MCF 10A (cell line): ENCODE measurements at regions of chr3 and their contacts with region 1.

Region 1: DNA sequence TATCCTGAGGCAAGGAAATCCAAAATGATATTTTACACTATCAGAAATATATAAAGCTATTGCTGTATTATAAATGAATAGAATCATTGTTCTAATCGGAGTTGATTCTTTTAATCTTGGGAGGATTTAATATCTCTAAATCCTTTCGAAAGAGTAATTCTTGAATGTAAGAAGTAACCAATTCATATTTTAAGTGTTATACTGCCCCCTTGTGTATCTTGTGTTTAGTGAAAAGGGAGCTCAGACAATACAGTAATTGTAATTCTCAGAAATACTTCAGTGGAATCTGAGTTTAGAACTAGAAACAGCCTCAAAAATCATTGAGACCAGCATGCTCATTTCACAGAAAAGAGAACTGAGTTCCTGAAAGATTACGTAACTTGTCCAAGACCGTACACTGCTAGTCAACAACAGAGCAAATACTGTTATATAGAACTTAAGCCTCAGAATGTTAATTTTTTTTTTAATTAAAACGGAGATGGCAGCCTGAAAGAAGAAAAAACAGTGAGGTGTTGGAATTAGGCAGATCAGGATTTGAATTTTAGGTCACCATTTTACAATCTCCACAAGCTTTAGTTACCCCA is 42.9 kb downstream of the PLCH1 start:
- DNase-seq: peak; percentile 60
- H3K4me3 Mint-ChIP-seq: no peak overlapping the region
- H3K27ac Mint-ChIP-seq: no peak overlapping the region
- H3K4me1 Mint-ChIP-seq: no peaks in the 10 kb centered on the region
- H3K27me3 Mint-ChIP-seq: no peaks in the 10 kb centered on the region
- CTCF ChIP-seq: peak; percentile 55

Region 2: GRCh38 chr3:155352900-155353490 is 349.0 kb before region 1 on chr3:
- CTCF ChIA-PET with region 1: interaction called, 139 read pairs
- POLR2A ChIA-PET with region 1: interaction called, 11 read pairs
- intact Hi-C with region 1: loop called (anchors 1 kb)
- DNase-seq: peak; percentile 50
- H3K4me3 Mint-ChIP-seq: no peak overlapping the region
- H3K27ac Mint-ChIP-seq: no peak overlapping the region
- H3K4me1 Mint-ChIP-seq: peaks cover 4% of the 10 kb centered on the region
- H3K27me3 Mint-ChIP-seq: no peaks in the 10 kb centered on the region
- CTCF ChIP-seq: peak; percentile 51

Region 3: DNA sequence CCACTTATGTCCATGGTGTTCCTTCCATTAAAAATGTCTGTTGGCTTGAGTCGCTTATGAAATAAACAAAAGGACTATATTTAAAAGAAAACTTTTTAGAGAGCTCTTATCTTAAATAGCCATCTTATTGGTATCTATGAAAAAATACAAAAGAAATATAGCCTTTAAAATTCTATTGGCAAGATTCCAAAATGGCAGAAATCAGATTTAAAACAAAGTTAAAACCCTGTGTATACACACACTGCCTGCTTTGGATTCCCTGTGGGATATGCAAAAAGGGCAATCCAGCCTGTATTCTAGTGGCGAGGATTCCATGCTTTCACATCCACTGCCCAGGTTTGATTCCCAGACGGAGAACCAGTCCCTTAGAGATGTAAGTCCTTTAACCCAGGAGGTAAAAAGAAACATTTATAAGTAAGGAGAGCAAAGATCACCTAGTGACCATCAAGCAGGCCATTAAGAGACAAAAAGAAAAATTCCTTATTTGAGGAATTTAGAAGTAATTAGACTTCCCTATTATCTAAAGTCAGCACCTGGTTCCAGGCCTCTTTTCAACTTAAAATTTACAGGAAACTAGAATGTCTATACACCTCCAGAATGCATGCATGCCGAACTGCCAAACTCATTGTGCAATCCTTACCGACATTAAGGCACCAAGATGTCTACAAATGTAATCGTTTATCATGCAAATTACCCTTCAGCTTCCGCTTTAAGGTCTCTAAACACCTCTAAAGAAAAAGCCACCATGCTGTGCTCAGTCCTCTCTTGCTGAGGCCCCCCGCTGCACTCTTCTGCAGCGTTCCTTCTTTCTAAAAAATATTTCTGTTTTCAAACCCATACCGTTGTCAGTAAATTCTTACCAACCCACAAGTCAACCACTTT is 338.9 kb before region 1 on chr3:
- CTCF ChIA-PET with region 1: interaction called, 13 read pairs
- POLR2A ChIA-PET with region 1: no interaction called
- intact Hi-C with region 1: no loop called
- DNase-seq: no peak
- H3K4me3 Mint-ChIP-seq: no peak overlapping the region
- H3K27ac Mint-ChIP-seq: no peak overlapping the region
- H3K4me1 Mint-ChIP-seq: no peaks in the 10 kb centered on the region
- H3K27me3 Mint-ChIP-seq: no peaks in the 10 kb centered on the region
- CTCF ChIP-seq: no peak

Region 4: GRCh38 chr3:155382396-155383042 is 319.5 kb before region 1 on chr3:
- CTCF ChIA-PET with region 1: interaction called, 84 read pairs
- POLR2A ChIA-PET with region 1: interaction called, 3 read pairs
- intact Hi-C with region 1: loop called (anchors 1 kb)
- DNase-seq: peak; percentile 82
- H3K4me3 Mint-ChIP-seq: no peak overlapping the region
- H3K27ac Mint-ChIP-seq: no peak overlapping the region
- H3K4me1 Mint-ChIP-seq: no peaks in the 10 kb centered on the region
- H3K27me3 Mint-ChIP-seq: no peaks in the 10 kb centered on the region
- CTCF ChIP-seq: peak; percentile 69

Region 5: DNA sequence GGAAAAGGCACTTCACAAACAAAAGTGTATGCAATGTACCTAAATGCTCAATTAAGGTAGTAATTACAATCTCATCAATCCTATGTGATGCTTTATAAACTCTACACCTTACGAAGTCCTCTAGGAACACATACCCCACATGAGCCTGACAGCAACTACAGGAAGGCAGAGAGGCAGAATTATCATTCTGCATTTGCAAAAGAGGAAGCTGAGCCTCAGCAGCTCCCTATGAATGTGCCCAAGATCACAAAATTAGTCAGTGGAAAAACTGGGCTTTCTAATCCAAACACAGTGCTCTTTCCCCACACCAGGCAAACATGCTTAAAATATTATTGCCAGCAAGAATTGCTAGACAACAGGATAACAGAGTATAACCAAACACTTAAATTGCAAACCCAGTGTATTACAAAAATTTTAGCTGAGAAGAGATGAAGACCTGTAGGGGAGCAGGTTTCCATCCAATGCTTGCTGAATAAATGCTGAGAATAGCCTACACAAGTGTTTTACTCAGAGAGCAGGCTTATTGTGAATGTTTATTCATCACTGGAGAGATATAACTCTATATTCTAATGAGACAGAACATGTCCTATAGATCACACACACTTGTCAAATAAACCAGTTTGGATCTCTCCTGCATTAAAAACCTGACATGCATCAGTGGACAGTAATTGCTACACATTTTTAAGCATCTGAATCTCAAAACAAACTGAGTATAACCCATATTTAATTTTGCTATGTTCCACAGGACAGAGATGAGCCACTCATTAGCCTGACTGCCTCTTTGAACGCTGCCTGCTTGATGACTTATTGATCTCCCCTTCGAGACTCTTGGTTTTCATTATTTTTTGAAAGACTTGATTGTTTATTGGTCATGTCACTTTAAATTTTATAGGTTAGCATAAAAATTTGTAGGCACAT is 19.3 kb before region 1 on chr3:
- CTCF ChIA-PET with region 1: interaction called, 15 read pairs
- POLR2A ChIA-PET with region 1: no interaction called
- intact Hi-C with region 1: no loop called
- DNase-seq: no peak
- H3K4me3 Mint-ChIP-seq: no peak overlapping the region
- H3K27ac Mint-ChIP-seq: no peak overlapping the region
- H3K4me1 Mint-ChIP-seq: no peaks in the 10 kb centered on the region
- H3K27me3 Mint-ChIP-seq: no peaks in the 10 kb centered on the region
- CTCF ChIP-seq: no peak

Region 6: GRCh38 chr3:155714295-155714718 is 12.3 kb after region 1 on chr3:
- CTCF ChIA-PET with region 1: interaction called, 15 read pairs
- POLR2A ChIA-PET with region 1: interaction called, 6 read pairs
- intact Hi-C with region 1: no loop called
- DNase-seq: no peak
- H3K4me3 Mint-ChIP-seq: no peak overlapping the region
- H3K27ac Mint-ChIP-seq: no peak overlapping the region
- H3K4me1 Mint-ChIP-seq: no peaks in the 10 kb centered on the region
- H3K27me3 Mint-ChIP-seq: no peaks in the 10 kb centered on the region
- CTCF ChIP-seq: no peak